Body of pancreas (tissue), 4 donors: ENCODE measurements at regions of chr9 and their contacts with region 1.

Region 1: DNA sequence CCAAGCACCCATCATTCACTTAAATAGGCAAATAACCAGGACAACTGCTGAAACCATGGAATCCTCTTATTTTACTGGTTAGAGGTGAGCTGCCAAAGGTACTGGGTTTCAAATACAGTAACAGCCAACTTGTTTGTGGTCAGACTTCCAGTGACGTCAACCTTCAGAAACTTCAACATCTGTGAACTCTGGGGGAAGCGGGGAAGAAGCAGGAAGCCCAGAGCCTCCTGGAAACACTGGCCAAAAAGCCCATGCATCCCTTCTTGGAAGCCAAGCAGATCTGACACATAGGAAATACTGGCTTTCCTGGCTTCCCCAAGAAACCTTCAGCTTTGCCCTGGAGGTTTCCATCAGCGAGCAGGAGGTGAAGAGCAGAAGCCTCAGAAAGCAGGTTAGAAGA is 4.9 kb upstream of the FRRS1L start:
- DNase-seq: no peak
- ATAC-seq: no peak
- H3K4me3 ChIP-seq: no peak overlapping the region
- H3K27ac ChIP-seq: no peak overlapping the region
- H3K4me1 ChIP-seq: peaks cover 4% of the 10 kb centered on the region
- H3K27me3 ChIP-seq: no peaks in the 10 kb centered on the region
- CTCF ChIP-seq: no peak
- POLR2A ChIP-seq: no peak

Region 2: DNA sequence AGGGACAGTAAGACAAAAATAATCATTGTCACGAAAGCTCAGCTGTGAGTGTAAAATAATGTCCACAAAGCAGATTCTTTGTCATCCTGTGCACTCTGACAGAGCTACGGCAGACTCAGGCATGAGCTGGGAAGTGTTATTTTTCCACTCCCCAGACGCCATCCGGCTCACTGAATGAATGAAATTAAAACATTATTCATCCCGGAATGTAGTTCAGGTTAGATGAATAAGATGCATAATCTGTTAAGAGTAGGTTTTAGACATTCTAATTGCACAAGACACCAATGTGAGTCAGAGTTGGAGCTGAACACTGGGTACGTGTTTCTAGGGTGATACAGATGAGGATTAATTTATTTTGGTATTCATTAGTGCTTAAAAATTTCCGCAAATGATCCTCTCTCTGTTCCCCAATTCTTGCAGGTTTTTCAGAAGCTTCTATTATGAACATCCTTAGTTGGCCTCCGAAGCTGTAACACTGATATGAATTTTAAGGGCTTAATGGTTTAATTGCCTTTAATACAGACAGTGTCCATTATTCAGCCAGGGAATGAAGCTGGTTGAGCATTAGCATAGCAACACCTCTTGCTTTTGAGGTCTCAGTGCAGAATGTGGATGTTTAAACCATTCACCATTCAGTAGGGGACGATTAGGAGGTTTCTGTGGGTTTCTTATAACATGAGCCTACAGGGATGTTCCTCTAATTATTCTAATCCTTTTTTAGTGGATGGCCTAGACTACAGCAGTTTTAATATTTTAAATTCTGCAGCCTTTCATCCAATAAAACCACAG is 60.7 kb after region 1 on chr9:
- intact Hi-C with region 1: loop called (anchors 10 kb)
- DNase-seq: no peak
- ATAC-seq: peak; percentile 12
- H3K4me3 ChIP-seq: no peak overlapping the region
- H3K27ac ChIP-seq: no peak overlapping the region
- H3K4me1 ChIP-seq: peaks cover 7% of the 10 kb centered on the region
- H3K27me3 ChIP-seq: no peaks in the 10 kb centered on the region
- CTCF ChIP-seq: no peak
- POLR2A ChIP-seq: no peak